ENCODE measurements at regions of chr15 and their contacts with region 1.

Region 1: DNA sequence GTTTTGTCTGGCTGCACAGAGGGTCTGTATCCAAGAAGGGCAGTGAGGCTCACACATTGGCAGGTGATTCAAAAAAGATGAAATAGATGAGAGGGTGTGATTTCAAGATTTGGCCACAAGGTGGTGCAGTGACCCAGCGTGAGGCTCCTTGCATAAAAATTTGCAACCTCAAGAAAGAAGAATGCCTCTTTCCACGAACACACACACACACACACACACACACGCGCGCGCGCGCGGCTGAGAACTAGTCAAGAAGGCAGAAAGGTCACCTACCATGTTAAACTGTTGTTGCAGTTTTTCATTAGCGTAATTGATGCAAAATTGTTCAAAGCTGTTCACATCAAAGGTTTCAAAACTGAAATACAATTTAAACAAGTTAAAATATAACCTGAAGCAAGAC is 39.2 kb downstream of the MYO5C start:
- DNase-seq: peak; percentile 51 to 87 (median 74)
- ATAC-seq: peak; percentile 93
- H3K4me3 ChIP-seq: no peak overlapping the region
- H3K4me3 Mint-ChIP-seq: peak overlapping the region; percentile 71
- H3K27ac ChIP-seq: no peak overlapping the region
- H3K27ac Mint-ChIP-seq: no peak overlapping the region
- H3K4me1 ChIP-seq: peaks cover 13% of the 10 kb centered on the region
- H3K4me1 Mint-ChIP-seq: peaks cover 18% of the 10 kb centered on the region
- H3K27me3 ChIP-seq: no peaks in the 10 kb centered on the region
- H3K27me3 Mint-ChIP-seq: no peaks in the 10 kb centered on the region
- CTCF ChIP-seq: peak; percentile 65

Region 2: GRCh38 chr15:52241489-52241888 is 14.9 kb before region 1 on chr15:
- CTCF ChIA-PET with region 1: interaction called, 10 read pairs
- POLR2A ChIA-PET with region 1: interaction called, 3 read pairs
- intact Hi-C with region 1: no loop called
- DNase-seq: peak in 1 of 9 experiments; percentile 49
- ATAC-seq: peak; percentile 71
- H3K4me3 ChIP-seq: no peak overlapping the region
- H3K4me3 Mint-ChIP-seq: peak overlapping the region; percentile 16
- H3K27ac ChIP-seq: no peak overlapping the region
- H3K27ac Mint-ChIP-seq: peak overlapping the region; percentile 53
- H3K4me1 ChIP-seq: peaks cover 12% of the 10 kb centered on the region
- H3K4me1 Mint-ChIP-seq: peaks cover 16% of the 10 kb centered on the region
- H3K27me3 ChIP-seq: no peaks in the 10 kb centered on the region
- H3K27me3 Mint-ChIP-seq: no peaks in the 10 kb centered on the region
- CTCF ChIP-seq: no peak

Region 3: DNA sequence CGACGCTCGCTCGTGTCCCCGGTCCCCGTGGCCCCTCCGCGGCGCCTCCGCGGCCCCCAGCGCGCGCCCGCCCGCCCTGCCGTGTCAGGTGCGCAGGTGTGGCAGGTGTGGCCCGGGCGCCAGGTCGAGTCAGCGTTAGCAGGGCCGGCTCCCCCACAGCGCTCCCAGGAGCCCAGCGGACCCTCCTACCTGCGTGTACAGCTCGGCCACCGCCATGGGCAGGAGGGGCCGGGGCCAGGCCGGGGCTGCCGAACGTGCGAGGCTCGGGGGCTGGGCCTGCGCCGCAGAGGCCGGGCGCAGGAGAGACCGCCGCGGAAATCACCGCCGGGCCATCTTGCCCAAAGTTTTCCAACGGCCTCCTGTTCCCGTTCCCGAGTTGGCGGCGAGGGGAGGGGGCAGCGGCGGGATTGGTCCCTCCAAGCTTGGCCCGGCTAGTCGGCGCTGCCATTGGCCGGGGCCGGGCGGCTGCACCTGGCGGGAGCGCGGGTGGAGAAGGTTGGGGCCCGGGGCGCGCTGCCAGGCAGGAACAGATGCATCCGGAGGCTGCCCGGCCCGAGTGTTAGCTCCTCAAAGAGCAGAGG is 39.1 kb after region 1 on chr15 and contains the start of gene MYO5C:
- CTCF ChIA-PET with region 1: no interaction called
- POLR2A ChIA-PET with region 1: no interaction called
- intact Hi-C with region 1: no loop called
- DNase-seq: peak in 1 of 9 experiments; percentile 31
- ATAC-seq: no peak
- H3K4me3 ChIP-seq: peak within 1 kb of the TSS in 1 of 2 experiments; percentile 31
- H3K4me3 Mint-ChIP-seq: peak within 1 kb of the TSS; percentile 42
- H3K27ac ChIP-seq: no peak within 1 kb of the TSS
- H3K27ac Mint-ChIP-seq: no peak within 1 kb of the TSS
- H3K4me1 ChIP-seq: peaks cover 11% of the 10 kb centered on the region
- H3K4me1 Mint-ChIP-seq: peaks cover 4% of the 10 kb centered on the region
- H3K27me3 ChIP-seq: peaks cover 3 to 10% of the 10 kb centered on the region in 2 experiments
- H3K27me3 Mint-ChIP-seq: peaks cover 35% of the 10 kb centered on the region
- CTCF ChIP-seq: no peak
- total RNA-seq, gene MYO5C: 0.24 to 0.31 TPM

Region 4: GRCh38 chr15:52466134-52466701 is 209.9 kb after region 1 on chr15:
- CTCF ChIA-PET with region 1: interaction called, 3 read pairs
- POLR2A ChIA-PET with region 1: no interaction called
- intact Hi-C with region 1: loop called in 1 of 2 experiments (anchors 2 kb)
- DNase-seq: peak in 3 of 9 experiments; percentile 31 to 56 (median 34)
- ATAC-seq: peak; percentile 58
- H3K4me3 ChIP-seq: no peak overlapping the region
- H3K4me3 Mint-ChIP-seq: no peak overlapping the region
- H3K27ac ChIP-seq: peak overlapping the region in 1 of 2 experiments; percentile 83
- H3K27ac Mint-ChIP-seq: peak overlapping the region; percentile 52
- H3K4me1 ChIP-seq: peaks cover 10% of the 10 kb centered on the region
- H3K4me1 Mint-ChIP-seq: peaks cover 39% of the 10 kb centered on the region
- H3K27me3 ChIP-seq: no peaks in the 10 kb centered on the region
- H3K27me3 Mint-ChIP-seq: no peaks in the 10 kb centered on the region
- CTCF ChIP-seq: no peak

Region 5: DNA sequence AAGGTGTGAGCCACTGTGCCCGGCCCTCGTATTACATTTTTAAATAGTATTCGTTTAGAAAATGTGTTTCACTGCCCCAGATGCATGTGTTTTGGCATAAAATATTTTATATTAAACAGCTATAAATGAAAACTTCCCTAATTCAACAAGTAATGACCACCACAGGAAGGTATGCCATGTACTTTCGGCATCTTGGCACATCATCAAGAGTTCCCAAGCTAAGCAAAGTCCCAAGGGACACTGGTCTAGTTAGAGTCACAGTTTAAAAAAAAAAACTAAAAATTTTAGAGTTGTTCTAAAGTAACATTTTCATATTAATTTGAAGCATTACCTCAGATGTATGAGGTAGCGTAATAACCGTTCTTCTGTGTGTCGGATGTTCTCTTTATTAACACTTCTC is 328.0 kb after region 1 on chr15:
- CTCF ChIA-PET with region 1: no interaction called
- POLR2A ChIA-PET with region 1: no interaction called
- intact Hi-C with region 1: loop called in 1 of 2 experiments (anchors 10 kb)
- DNase-seq: no peak
- ATAC-seq: no peak
- H3K4me3 ChIP-seq: no peak overlapping the region
- H3K4me3 Mint-ChIP-seq: no peak overlapping the region
- H3K27ac ChIP-seq: no peak overlapping the region
- H3K27ac Mint-ChIP-seq: no peak overlapping the region
- H3K4me1 ChIP-seq: no peaks in the 10 kb centered on the region
- H3K4me1 Mint-ChIP-seq: no peaks in the 10 kb centered on the region
- H3K27me3 ChIP-seq: no peaks in the 10 kb centered on the region
- H3K27me3 Mint-ChIP-seq: no peaks in the 10 kb centered on the region
- CTCF ChIP-seq: no peak

Region 6: GRCh38 chr15:52735231-52736089 is 479.1 kb after region 1 on chr15:
- CTCF ChIA-PET with region 1: interaction called, 137 read pairs
- POLR2A ChIA-PET with region 1: interaction called, 4 read pairs
- intact Hi-C with region 1: loop called (anchors 1 kb)
- DNase-seq: peak; percentile 39 to 83 (median 64)
- ATAC-seq: peak; percentile 89
- H3K4me3 ChIP-seq: no peak overlapping the region
- H3K4me3 Mint-ChIP-seq: no peak overlapping the region
- H3K27ac ChIP-seq: no peak overlapping the region
- H3K27ac Mint-ChIP-seq: no peak overlapping the region
- H3K4me1 ChIP-seq: peaks cover 3% of the 10 kb centered on the region
- H3K4me1 Mint-ChIP-seq: peaks cover 5% of the 10 kb centered on the region
- H3K27me3 ChIP-seq: no peaks in the 10 kb centered on the region
- H3K27me3 Mint-ChIP-seq: peaks cover 7% of the 10 kb centered on the region
- CTCF ChIP-seq: peak; percentile 95

Measured in CD8-positive, alpha-beta T cell (primary cell).